ENCODE measurements at regions of chr1 and their contacts with region 1.

Region 1: GRCh38 chr1:35192853-35193664 is at the start of gene SFPQ:
- DNase-seq: peak; percentile 94 to 99
- H3K4me3 ChIP-seq: peak within 1 kb of the TSS; percentile 72 to 100
- H3K27ac ChIP-seq: peak within 1 kb of the TSS; percentile 99
- H3K4me1 ChIP-seq: peaks cover 5 to 22% of the 10 kb centered on the region in 2 donors
- H3K27me3 ChIP-seq: no peaks in the 10 kb centered on the region
- CTCF ChIP-seq: no peak
- total RNA-seq, gene SFPQ: 231 TPM

Region 2: GRCh38 chr1:34859446-34860200 is 333.4 kb before region 1 on chr1 and contains the start of gene SMIM12:
- intact Hi-C with region 1: loop called (anchors 2 kb)
- DNase-seq: peak; percentile 73 to 97
- H3K4me3 ChIP-seq: peak within 1 kb of the TSS; percentile 56 to 93
- H3K27ac ChIP-seq: peak within 1 kb of the TSS; percentile 89 to 90
- H3K4me1 ChIP-seq: peaks cover 10 to 12% of the 10 kb centered on the region in 2 donors
- H3K27me3 ChIP-seq: no peaks in the 10 kb centered on the region
- CTCF ChIP-seq: peak; percentile 90 to 92 (median 91)
- total RNA-seq, gene SMIM12: 23.2 TPM

Region 3: DNA sequence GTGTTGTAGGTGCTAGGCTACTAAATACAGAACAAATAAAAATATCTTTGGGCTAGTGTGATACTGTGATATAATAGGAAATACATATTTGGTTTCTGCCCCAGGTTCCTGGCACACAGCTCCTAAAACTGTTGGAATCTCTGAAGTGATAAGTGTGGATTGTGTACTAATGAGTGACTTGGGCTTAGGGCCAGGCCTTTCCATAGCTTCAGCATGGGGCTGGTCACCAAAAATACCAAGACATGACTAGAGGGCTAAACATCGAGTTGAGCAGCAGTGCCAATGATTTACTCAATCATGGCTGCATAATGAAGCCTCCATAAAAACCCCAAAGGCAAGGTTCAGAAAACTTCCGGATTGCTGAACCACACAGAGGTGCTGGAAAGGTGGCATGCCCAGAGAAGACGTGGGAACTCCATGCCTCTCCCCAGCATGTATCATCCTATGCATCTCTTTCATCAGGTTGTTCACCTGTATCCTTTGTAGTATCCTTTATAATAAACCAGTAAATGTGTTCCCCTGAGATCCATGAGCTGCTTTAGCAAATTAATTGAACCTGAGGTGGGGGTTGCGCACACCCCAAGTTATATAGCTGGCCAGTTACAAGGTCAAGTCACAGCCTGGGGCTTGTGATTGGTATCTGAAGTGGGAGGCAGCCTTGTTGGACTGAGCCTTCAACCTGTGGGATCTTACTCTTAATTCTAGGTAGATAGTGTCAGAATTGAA is 127.1 kb after region 1 on chr1:
- intact Hi-C with region 1: no loop called
- DNase-seq: peak in 1 of 2 donors; percentile 77
- H3K4me3 ChIP-seq: no peak overlapping the region
- H3K27ac ChIP-seq: peak overlapping the region; percentile 42 to 52
- H3K4me1 ChIP-seq: peaks cover 0 to 23% of the 10 kb centered on the region in 2 donors
- H3K27me3 ChIP-seq: no peaks in the 10 kb centered on the region
- CTCF ChIP-seq: no peak

Measured in ascending aorta (tissue), 2 donors.